K562 (cell line): ENCODE measurements at regions of chr19 and their contacts with region 1.

Region 1: DNA sequence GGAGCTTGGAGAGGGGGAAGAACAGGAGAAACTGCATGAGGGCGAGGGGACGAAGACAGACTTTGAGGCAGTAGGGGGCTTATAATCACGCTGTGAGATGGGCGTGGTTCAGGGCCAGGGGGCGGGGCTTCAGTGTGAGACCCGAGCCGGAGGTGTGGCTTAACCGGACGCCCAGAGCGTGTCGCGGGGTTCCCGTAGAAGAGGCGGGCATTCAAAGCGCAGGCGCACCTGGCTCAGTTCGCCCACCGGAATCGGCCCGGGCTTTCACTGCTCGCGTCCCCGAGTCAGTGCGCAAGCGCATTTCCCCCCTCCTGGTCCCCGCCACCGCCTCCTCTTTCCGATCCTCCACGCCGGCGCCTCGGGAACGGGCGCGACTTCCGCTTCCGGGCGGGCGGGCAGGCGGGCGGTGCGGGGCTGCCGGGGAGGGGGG is 225 bp upstream of the ZNF865 start:
- DNase-seq: peak; percentile 88 to 98 (median 92)
- ATAC-seq: peak; percentile 89
- H3K4me3 ChIP-seq: peak overlapping the region; percentile 84
- H3K27ac ChIP-seq: peak overlapping the region; percentile 87
- H3K4me1 ChIP-seq: peaks cover 27 to 44% of the 10 kb centered on the region in 2 experiments
- H3K27me3 ChIP-seq: no peaks in the 10 kb centered on the region
- CTCF ChIP-seq: no peak
- EP300 ChIP-seq: no peak
- POLR2A ChIP-seq: no peak; the same call in 1 of the 2 replicates
- RAD21 ChIP-seq: no peak

Region 2: DNA sequence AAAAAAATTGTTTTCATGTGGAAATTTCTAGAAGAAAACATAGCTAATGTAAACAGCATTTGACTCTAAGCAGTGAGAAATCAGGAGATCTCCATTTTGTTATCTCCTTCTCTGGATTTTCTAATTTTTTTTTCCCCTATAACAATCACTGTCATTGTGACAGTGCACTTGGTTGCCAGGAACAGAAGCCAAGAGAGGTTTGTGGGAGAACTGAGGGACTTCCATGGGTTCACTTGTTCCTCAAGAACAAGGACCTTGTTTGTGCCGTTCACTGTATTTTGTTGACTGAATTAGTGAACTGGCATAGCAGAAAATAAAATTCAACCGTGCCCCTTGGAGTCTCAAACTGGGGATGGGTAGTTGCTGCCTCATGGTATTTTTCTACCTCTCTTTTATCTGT is 179.2 kb before region 1 on chr19:
- CTCF ChIA-PET with region 1: no interaction called
- POLR2A ChIA-PET with region 1: no interaction called
- in situ Hi-C with region 1: no loop called
- intact Hi-C with region 1: no loop called
- DNase-seq: no peak
- ATAC-seq: no peak
- H3K4me3 ChIP-seq: no peak overlapping the region
- H3K27ac ChIP-seq: no peak overlapping the region
- H3K4me1 ChIP-seq: no peaks in the 10 kb centered on the region; a peak in 1 of 5 replicates
- H3K27me3 ChIP-seq: peaks cover 11 to 15% of the 10 kb centered on the region in 2 experiments
- CTCF ChIP-seq: no peak
- EP300 ChIP-seq: no peak
- POLR2A ChIP-seq: no peak
- RAD21 ChIP-seq: no peak

Region 3: DNA sequence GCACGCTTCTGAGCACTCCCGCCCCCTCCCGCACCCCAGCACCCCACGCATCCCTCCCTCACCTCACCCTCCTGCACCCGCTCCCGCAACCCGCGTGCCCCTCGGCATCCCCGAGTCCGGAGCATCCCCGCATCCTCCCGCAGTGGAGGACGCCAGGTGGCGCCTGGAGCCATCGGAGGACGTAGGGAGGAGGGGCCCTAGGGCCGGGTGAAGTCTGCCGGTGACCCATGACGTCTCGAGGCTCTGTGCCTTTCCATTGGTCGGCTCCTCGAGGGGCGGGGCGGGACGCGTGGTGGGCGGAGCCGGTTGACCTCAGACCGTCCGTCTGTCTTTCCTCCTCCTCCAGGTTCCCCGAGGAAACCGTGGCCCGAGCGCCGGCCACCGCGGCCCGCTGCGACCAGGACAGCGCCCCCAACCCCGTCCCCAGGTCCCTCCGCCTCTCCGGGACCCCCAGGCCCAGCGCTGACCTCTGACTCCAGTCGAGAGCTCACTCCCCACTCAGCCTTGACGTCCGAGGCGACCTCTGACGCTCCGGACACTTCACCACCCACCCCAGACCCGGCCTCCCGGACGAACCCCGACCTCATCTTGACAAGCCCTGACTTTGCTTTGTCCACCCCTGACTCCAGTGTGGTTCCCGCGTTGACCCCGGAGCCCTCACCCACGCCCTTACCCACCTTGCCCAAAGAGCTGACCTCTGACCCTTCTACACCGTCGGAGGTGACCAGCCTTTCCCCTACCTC is 88.2 kb before region 1 on chr19:
- CTCF ChIA-PET with region 1: interaction called, 23 read pairs
- POLR2A ChIA-PET with region 1: no interaction called
- in situ Hi-C with region 1: no loop called
- intact Hi-C with region 1: loop called (anchors 1 kb)
- DNase-seq: peak; percentile 95 to 100 (median 100)
- ATAC-seq: peak; percentile 100
- H3K4me3 ChIP-seq: peak overlapping the region; percentile 42
- H3K27ac ChIP-seq: peak overlapping the region; percentile 76
- H3K4me1 ChIP-seq: peaks cover 3 to 22% of the 10 kb centered on the region in 2 experiments; a peak in 3 of 5 replicates
- H3K27me3 ChIP-seq: peaks cover 3 to 16% of the 10 kb centered on the region in 2 experiments; a peak in 3 of 5 replicates
- CTCF ChIP-seq: peak; percentile 90 to 96 (median 96)
- EP300 ChIP-seq: no peak
- POLR2A ChIP-seq: 0 out of 2 replicates have a peak, but pooled peaks have one; percentile 49
- RAD21 ChIP-seq: peak; percentile 98 to 99

Region 4: GRCh38 chr19:55619286-55619685 is 14.1 kb after region 1 on chr19:
- CTCF ChIA-PET with region 1: no interaction called
- POLR2A ChIA-PET with region 1: interaction called, 18 read pairs
- in situ Hi-C with region 1: no loop called
- intact Hi-C with region 1: no loop called
- DNase-seq: no peak
- ATAC-seq: no peak
- H3K4me3 ChIP-seq: no peak overlapping the region
- H3K27ac ChIP-seq: no peak overlapping the region
- H3K4me1 ChIP-seq: peaks cover 6 to 10% of the 10 kb centered on the region in 2 experiments; a peak in 3 of 5 replicates
- H3K27me3 ChIP-seq: no peaks in the 10 kb centered on the region
- CTCF ChIP-seq: no peak
- EP300 ChIP-seq: no peak
- POLR2A ChIP-seq: no peak
- RAD21 ChIP-seq: no peak

Region 5: GRCh38 chr19:55809381-55810058 is 204.3 kb after region 1 on chr19:
- CTCF ChIA-PET with region 1: no interaction called
- POLR2A ChIA-PET with region 1: no interaction called
- in situ Hi-C with region 1: no loop called
- intact Hi-C with region 1: no loop called
- DNase-seq: peak; percentile 77 to 89 (median 80)
- ATAC-seq: peak; percentile 100
- H3K4me3 ChIP-seq: no peak overlapping the region
- H3K27ac ChIP-seq: no peak overlapping the region
- H3K4me1 ChIP-seq: peaks cover 0 to 2% of the 10 kb centered on the region in 2 experiments; a peak in 1 of 5 replicates
- H3K27me3 ChIP-seq: peaks cover 0 to 2% of the 10 kb centered on the region in 2 experiments; a peak in 1 of 5 replicates
- CTCF ChIP-seq: peak; percentile 82 to 87 (median 85)
- EP300 ChIP-seq: 0 out of 2 replicates have a peak, but pooled peaks have one; percentile 8
- POLR2A ChIP-seq: no peak
- RAD21 ChIP-seq: peak; percentile 32 to 81; a peak in 3 of 4 replicates